ENCODE measurements at regions of chr20 and their contacts with region 1.

Region 1: DNA sequence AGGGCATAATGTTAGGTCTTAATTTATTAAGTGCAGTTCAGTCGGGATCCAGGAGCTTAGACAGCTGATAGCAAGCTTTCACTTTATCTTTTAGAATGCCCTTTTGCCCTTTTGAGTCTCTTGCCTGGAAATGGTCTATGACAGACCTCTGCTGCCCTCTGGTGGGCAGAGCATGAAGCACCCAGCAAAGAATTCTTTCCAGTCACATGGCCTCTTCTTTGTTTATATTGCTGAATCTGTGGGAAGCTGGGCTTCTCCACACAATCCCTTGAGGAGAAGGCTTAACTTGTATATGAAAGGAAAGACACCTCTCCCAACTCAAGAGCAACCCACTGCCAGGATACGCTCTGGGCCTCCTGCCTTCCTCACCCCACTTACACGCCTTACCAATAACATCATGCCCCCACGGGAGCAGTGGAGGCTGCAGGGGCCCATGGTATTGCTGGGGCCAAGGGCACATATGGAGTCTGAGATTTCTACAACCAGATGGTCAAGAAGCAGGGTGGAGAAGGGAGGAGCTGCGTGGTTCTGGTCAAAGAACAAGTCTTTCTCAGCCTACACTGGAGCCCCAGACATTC is 20.4 kb downstream of the WFDC3 start:
- DNase-seq: peak; percentile 85
- ATAC-seq: peak; percentile 78
- H3K4me3 Mint-ChIP-seq: no peak overlapping the region
- H3K27ac Mint-ChIP-seq: no peak overlapping the region
- H3K4me1 Mint-ChIP-seq: peaks cover 5% of the 10 kb centered on the region
- H3K27me3 Mint-ChIP-seq: peaks cover 11% of the 10 kb centered on the region

Region 2: GRCh38 chr20:45362804-45363610 is 408.3 kb before region 1 on chr20 and contains the start of gene SYS1:
- CTCF ChIA-PET with region 1: interaction called, 32 read pairs
- POLR2A ChIA-PET with region 1: no interaction called
- DNase-seq: peak; percentile 99
- ATAC-seq: peak; percentile 91
- H3K4me3 Mint-ChIP-seq: peak within 1 kb of the TSS; percentile 97
- H3K27ac Mint-ChIP-seq: peak within 1 kb of the TSS; percentile 93
- H3K4me1 Mint-ChIP-seq: peaks cover 61% of the 10 kb centered on the region
- H3K27me3 Mint-ChIP-seq: no peaks in the 10 kb centered on the region
- total RNA-seq, gene SYS1: 28.0 to 30.8 TPM

Region 3: DNA sequence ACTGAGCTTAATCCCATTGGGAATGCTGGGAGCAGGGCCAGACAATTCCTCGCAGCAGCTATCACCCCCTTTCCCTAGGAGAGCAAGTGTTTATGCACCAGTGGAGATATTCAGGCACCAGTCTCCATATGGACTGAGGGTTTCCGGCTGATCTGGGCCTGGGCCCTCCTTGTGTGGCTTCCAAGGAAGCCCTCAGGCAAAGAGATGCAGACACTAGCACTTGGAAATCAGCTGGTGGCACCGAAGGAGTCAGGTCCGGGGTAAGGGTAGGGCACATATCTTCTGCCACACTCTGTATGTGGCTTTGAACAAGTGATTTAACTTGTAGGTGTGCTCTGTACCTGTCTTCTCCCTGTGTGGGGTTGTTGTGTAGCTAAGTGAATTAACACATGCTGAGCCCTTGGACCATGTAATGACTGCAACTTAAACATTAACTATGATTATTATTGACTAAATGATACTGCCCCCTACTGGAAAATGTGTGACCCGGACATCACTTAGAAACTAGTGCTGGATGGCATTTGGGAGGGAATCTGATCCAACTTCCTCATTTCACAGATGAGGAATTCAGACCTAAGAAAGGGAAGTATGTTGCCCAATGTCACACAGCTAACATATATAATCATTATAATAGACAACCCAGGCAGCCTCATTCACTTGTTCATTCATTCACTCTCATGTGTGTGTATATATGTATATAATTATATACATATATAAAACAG is 321.0 kb before region 1 on chr20:
- CTCF ChIA-PET with region 1: interaction called, 22 read pairs
- POLR2A ChIA-PET with region 1: no interaction called
- DNase-seq: peak; percentile 42
- ATAC-seq: peak; percentile 50
- H3K4me3 Mint-ChIP-seq: no peak overlapping the region
- H3K27ac Mint-ChIP-seq: no peak overlapping the region
- H3K4me1 Mint-ChIP-seq: peaks cover 17% of the 10 kb centered on the region
- H3K27me3 Mint-ChIP-seq: peaks cover 9% of the 10 kb centered on the region

Region 4: DNA sequence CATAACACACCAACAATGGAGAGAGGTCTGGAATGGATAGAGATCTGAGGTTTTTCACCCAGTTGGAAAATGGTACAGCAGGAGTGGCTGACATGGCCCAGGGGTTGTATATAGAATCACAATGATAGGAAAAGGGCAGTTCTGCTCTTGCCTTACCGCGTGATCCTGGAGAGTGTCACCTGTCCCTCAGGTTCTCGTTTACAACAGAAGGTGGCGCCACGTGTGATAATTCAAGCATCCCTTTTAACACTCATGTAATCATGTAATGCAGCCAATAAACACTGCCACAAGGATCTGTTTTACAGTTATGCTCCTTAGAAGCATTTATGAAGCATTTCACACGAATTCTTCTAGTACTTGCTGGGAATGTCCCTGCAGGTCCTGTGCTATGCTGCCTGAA is 314.6 kb before region 1 on chr20:
- CTCF ChIA-PET with region 1: interaction called, 36 read pairs
- POLR2A ChIA-PET with region 1: no interaction called
- DNase-seq: peak; percentile 68
- ATAC-seq: peak; percentile 79
- H3K4me3 Mint-ChIP-seq: no peak overlapping the region
- H3K27ac Mint-ChIP-seq: no peak overlapping the region
- H3K4me1 Mint-ChIP-seq: no peaks in the 10 kb centered on the region
- H3K27me3 Mint-ChIP-seq: peaks cover 2% of the 10 kb centered on the region

Region 5: DNA sequence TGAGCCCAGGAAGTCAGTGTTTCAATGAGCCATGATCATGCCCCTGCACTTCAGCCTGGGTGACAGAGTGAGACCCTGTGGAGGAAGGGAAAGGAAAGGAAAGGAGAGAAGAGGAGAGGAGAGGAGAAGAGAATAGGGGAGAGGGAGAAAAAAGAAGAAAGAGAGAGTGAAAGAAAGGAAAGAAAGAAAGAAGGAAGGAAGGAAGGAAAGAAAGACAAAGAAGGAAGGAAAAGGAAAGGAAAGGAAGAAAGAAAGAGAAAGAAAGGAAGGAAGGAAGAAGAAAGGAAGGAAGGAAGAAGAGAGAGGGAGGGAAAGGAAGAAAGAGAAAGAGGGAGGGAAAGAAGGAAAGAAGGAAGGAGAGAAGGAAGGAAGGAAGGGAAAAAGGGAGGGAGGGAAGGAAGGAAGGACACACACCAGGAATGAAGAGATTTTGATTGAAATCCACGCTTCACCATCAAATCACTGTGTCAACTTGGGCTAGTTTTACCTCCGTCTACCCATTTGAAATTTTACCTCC is 206.5 kb before region 1 on chr20:
- CTCF ChIA-PET with region 1: no interaction called
- POLR2A ChIA-PET with region 1: no interaction called
- DNase-seq: no peak
- ATAC-seq: no peak
- H3K4me3 Mint-ChIP-seq: no peak overlapping the region
- H3K27ac Mint-ChIP-seq: no peak overlapping the region
- H3K4me1 Mint-ChIP-seq: no peaks in the 10 kb centered on the region
- H3K27me3 Mint-ChIP-seq: peaks cover 11% of the 10 kb centered on the region

Region 6: DNA sequence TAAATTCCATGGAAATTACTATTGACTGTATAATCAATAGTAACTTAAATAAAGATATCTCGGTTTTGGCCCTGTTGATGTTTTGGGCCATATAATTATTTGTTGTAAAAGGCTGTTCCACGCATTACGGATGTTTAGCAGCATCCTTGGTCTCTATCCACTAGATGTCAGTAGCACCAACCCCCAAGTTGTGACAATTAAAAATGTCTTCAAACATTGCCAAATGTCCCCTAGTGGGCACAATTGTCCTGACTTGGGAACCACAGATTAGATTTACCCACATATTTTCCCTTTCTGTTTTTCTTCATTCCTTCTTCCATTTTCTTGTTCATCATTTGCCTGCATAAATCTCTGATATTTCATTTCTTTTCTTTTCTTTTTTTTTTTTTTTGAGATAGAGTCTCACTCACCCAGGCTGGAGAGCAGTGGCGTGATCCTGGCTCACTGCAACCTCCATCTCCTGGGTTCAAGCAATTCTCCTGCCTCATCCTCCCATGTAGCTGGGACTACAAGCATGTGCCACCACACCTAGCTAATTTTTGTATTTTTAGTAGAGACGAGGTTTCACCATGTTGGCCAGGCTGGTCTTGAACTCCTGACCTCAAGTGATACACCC is 178.6 kb before region 1 on chr20:
- CTCF ChIA-PET with region 1: interaction called, 19 read pairs
- POLR2A ChIA-PET with region 1: no interaction called
- DNase-seq: peak; percentile 50
- ATAC-seq: peak; percentile 60
- H3K4me3 Mint-ChIP-seq: no peak overlapping the region
- H3K27ac Mint-ChIP-seq: no peak overlapping the region
- H3K4me1 Mint-ChIP-seq: no peaks in the 10 kb centered on the region
- H3K27me3 Mint-ChIP-seq: peaks cover 23% of the 10 kb centered on the region

Region 7: GRCh38 chr20:45629496-45630100 is 141.7 kb before region 1 on chr20 and contains the start of gene WFDC10A:
- CTCF ChIA-PET with region 1: interaction called, 26 read pairs
- POLR2A ChIA-PET with region 1: no interaction called
- DNase-seq: peak; percentile 32
- ATAC-seq: peak; percentile 69
- H3K4me3 Mint-ChIP-seq: no peak within 1 kb of the TSS
- H3K27ac Mint-ChIP-seq: no peak within 1 kb of the TSS
- H3K4me1 Mint-ChIP-seq: no peaks in the 10 kb centered on the region
- H3K27me3 Mint-ChIP-seq: peaks cover 9% of the 10 kb centered on the region
- total RNA-seq, gene WFDC10A: not detected

Region 8: GRCh38 chr20:45792332-45792686 is 21.0 kb after region 1 on chr20:
- CTCF ChIA-PET with region 1: interaction called, 10 read pairs
- POLR2A ChIA-PET with region 1: no interaction called
- DNase-seq: peak; percentile 35
- ATAC-seq: no peak
- H3K4me3 Mint-ChIP-seq: peak overlapping the region; percentile 82
- H3K27ac Mint-ChIP-seq: peak overlapping the region; percentile 93
- H3K4me1 Mint-ChIP-seq: peaks cover 13% of the 10 kb centered on the region
- H3K27me3 Mint-ChIP-seq: no peaks in the 10 kb centered on the region

Measured in activated CD8-positive, alpha-beta T cell treated with anti-CD3 and anti-CD28 coated beads, Interleukin-2, amount 10 ng/mL, durations not matched to agents 7 days and 5 days (primary cell).